Activated CD4-positive, alpha-beta memory T cell treated with anti-CD3 and anti-CD28 coated beads for 36 hours (primary cell): ENCODE measurements at regions of chr9 and their contacts with region 1.

Region 1: DNA sequence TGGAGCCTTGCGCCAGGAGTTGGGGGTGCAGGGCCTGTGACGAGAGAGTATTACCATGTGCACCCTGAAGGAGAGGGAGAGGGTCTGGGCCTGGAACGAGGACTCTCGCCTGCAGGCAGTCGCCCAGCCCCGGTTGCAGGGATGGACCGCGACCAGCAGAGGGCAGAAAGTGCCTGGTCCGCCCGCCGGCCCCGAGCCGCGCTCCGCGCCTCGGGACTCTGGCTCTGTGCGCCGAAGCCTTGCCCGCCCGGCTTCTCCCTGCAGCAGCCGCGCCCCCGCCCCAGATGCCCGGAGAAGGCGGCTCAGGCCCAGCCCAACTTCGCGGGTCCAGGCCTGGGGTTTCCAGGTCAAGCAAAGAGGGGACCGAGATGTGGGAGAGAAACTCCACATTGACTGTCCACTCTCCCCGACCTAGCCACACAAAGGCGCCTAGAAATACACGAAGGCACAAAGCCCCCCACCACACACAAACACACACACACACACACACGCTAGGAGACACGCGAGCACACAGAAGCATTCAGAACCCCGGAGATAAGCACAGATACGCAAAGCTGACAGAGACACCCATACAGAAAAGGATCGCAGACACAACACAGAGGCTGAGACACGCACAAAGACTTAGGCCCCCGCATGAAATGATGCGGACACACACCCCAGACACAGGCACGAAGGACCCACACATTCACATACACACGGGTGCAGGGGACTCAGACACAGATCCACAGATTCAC is 2.0 kb upstream of the LMX1B start:
- DNase-seq: peak; percentile 82
- H3K4me3 Mint-ChIP-seq: no peak overlapping the region
- H3K27ac Mint-ChIP-seq: no peak overlapping the region
- H3K4me1 Mint-ChIP-seq: peaks cover 20% of the 10 kb centered on the region
- H3K27me3 Mint-ChIP-seq: peaks cover 68% of the 10 kb centered on the region

Region 2: GRCh38 chr9:126546036-126546435 is 65.7 kb before region 1 on chr9:
- CTCF ChIA-PET with region 1: no interaction called
- POLR2A ChIA-PET with region 1: no interaction called
- intact Hi-C with region 1: no loop called
- DNase-seq: no peak
- H3K4me3 Mint-ChIP-seq: no peak overlapping the region
- H3K27ac Mint-ChIP-seq: no peak overlapping the region
- H3K4me1 Mint-ChIP-seq: no peaks in the 10 kb centered on the region
- H3K27me3 Mint-ChIP-seq: peaks cover 1% of the 10 kb centered on the region

Region 3: GRCh38 chr9:126676685-126677143 is 65.0 kb after region 1 on chr9:
- CTCF ChIA-PET with region 1: no interaction called
- POLR2A ChIA-PET with region 1: no interaction called
- intact Hi-C with region 1: loop called (anchors 5 kb)
- DNase-seq: no peak
- H3K4me3 Mint-ChIP-seq: no peak overlapping the region
- H3K27ac Mint-ChIP-seq: no peak overlapping the region
- H3K4me1 Mint-ChIP-seq: peaks cover 7% of the 10 kb centered on the region
- H3K27me3 Mint-ChIP-seq: peaks cover 72% of the 10 kb centered on the region

Region 4: GRCh38 chr9:126690431-126691350 is 78.9 kb after region 1 on chr9:
- CTCF ChIA-PET with region 1: interaction called, 28 read pairs
- POLR2A ChIA-PET with region 1: no interaction called
- intact Hi-C with region 1: loop called (anchors 1 kb)
- DNase-seq: peak; percentile 68
- H3K4me3 Mint-ChIP-seq: no peak overlapping the region
- H3K27ac Mint-ChIP-seq: no peak overlapping the region
- H3K4me1 Mint-ChIP-seq: no peaks in the 10 kb centered on the region
- H3K27me3 Mint-ChIP-seq: peaks cover 29% of the 10 kb centered on the region